Activated naive CD4-positive, alpha-beta T cell treated with anti-CD3 and anti-CD28 coated beads, Interleukin-2, amount 10 ng/mL, durations not matched to agents 7 days and 5 days (primary cell): ENCODE measurements at regions of chr5 and their contacts with region 1.

Region 1: DNA sequence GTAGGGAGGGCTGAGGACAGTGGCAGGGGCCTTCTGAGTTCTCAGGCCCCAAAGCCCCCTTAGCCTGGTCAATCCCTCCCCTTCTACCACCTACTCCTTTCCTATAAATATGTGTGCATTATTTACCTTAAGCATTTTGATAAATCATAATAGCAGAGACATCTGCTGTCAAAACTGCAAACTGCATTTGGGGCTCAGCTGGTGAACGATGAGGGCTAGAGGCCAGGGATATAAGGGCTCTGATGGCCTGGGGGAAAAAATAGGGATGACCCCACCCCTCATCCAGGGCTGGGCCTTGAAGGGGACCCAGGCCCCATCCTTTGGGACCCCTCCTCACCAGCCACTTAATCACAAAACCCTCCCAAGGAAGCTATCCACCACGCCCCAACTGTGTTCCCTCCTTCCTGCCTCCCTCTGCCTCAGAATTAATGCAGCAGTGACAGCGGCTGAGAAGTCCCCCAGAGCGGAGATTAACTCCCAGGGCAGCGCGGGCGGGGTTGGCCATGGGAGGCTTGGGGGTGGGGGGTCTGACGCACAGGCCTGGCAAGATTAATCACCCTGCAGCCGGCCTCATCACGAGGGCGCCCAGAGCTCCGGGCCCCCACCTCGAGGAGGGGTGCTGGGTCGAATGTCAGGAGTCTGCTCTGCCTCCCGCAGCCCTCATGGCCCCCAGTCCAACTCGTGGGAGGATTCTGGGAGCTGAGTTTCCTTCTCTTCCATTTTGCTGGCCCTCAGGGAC is 42.1 kb downstream of the CXXC5 start:
- DNase-seq: peak; percentile 48
- H3K4me3 Mint-ChIP-seq: no peak overlapping the region
- H3K27ac Mint-ChIP-seq: no peak overlapping the region
- H3K4me1 Mint-ChIP-seq: no peaks in the 10 kb centered on the region
- H3K27me3 Mint-ChIP-seq: peaks cover 57% of the 10 kb centered on the region

Region 2: GRCh38 chr5:139642891-139643871 is 47.1 kb before region 1 on chr5:
- CTCF ChIA-PET with region 1: interaction called, 12 read pairs
- DNase-seq: no peak
- H3K4me3 Mint-ChIP-seq: no peak overlapping the region
- H3K27ac Mint-ChIP-seq: no peak overlapping the region
- H3K4me1 Mint-ChIP-seq: peaks cover 17% of the 10 kb centered on the region
- H3K27me3 Mint-ChIP-seq: peaks cover 53% of the 10 kb centered on the region

Region 3: DNA sequence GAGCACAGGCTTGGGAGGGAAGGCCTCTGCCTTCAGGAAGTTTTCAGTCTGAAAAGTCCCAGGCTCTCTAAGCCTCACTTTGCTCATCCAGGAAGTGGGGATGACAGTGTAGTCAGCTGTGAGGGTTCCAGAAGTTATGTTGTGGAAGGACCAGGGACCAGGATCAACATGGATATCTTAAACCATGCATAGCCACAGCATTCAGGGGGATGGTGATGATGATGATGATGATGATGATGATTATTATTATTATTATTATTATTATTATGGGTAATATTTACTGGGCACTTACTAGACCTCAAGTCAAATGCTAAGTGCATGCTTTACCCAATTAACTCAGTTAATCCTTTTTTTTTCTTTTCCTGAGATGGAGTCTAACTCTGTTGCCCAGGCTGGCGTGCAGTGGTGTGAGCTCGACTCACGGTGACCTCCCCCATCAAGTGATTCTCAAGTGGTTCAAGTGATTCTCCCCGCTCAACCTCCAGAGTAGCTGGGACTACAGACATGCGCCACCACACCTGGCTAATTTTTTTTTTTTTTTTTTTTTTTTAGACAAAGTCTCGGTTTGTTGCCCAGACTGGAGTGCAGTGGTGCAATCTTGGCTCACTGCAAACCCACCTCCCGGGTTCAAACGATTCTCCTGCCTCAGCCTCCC is 26.9 kb after region 1 on chr5:
- CTCF ChIA-PET with region 1: no interaction called
- DNase-seq: no peak
- H3K4me3 Mint-ChIP-seq: no peak overlapping the region
- H3K27ac Mint-ChIP-seq: no peak overlapping the region
- H3K4me1 Mint-ChIP-seq: no peaks in the 10 kb centered on the region
- H3K27me3 Mint-ChIP-seq: peaks cover 33% of the 10 kb centered on the region